ENCODE measurements at regions of chr6 and their contacts with region 1.

Region 1: GRCh38 chr6:24646782-24647181 is 791 bp upstream of the KIAA0319 start:
- DNase-seq: no peak
- H3K4me3 ChIP-seq: peak overlapping the region in 1 of 4 experiments; percentile 73; a peak in 1 of 8 replicates
- H3K27ac ChIP-seq: no peak overlapping the region
- H3K4me1 ChIP-seq: no peaks in the 10 kb centered on the region
- H3K27me3 ChIP-seq: no peaks in the 10 kb centered on the region; a peak in 1 of 7 replicates
- CTCF ChIP-seq: no peak
- EP300 ChIP-seq: no peak
- POLR2A ChIP-seq: no peak
- RAD21 ChIP-seq: no peak

Region 2: DNA sequence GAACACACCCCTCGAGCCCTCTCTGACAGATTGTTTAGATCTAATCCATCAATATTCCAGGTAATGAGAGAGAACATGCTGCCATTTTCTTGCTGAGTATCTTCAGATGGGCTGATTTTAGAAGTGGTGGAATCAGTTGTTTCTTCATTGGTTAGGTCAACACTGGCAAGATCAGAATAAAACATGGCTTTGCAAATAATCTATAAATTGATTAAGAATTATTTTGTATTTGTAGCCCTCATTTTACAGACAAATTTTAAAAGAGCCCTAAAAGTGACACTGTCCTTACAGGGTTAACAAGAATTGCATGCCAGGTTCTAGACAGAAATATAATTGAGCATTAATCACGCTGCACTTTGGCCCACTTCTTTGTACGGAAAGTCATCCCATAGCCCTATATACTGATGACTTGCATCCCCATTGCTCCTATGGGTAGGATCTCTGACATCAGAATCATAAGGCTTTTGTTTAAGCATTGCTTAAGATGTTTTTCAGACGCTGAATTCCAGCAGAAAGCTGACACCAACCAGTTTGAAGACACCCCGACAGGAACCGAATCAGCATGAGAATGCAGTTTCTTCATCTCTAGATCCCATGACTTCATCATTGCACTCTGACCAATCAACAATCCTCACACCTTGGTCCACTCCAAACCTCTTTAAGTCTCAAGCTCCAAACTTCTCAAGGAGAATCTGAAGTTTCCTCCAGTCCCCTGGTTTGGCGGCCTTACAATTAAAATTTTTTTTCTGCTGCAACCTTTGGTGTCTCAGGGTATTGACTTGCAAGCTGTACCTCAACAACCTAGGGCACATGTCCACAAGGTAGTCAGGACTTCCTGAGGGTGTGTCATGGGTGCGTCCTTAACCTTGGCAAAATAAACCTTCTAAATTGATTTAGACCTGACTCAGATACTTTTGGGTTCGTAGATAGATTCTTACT is 12.1 kb after region 1 on chr6:
- CTCF ChIA-PET with region 1: interaction called, 10 read pairs
- POLR2A ChIA-PET with region 1: interaction called, 18 read pairs
- DNase-seq: no peak
- H3K4me3 ChIP-seq: peak overlapping the region in 1 of 4 experiments; percentile 13; a peak in 1 of 8 replicates
- H3K27ac ChIP-seq: no peak overlapping the region
- H3K4me1 ChIP-seq: peaks cover 2 to 3% (median 2%) of the 10 kb centered on the region in 4 experiments; a peak in 4 of 7 replicates
- H3K27me3 ChIP-seq: no peaks in the 10 kb centered on the region
- CTCF ChIP-seq: no peak
- EP300 ChIP-seq: no peak
- POLR2A ChIP-seq: no peak
- RAD21 ChIP-seq: no peak

Region 3: DNA sequence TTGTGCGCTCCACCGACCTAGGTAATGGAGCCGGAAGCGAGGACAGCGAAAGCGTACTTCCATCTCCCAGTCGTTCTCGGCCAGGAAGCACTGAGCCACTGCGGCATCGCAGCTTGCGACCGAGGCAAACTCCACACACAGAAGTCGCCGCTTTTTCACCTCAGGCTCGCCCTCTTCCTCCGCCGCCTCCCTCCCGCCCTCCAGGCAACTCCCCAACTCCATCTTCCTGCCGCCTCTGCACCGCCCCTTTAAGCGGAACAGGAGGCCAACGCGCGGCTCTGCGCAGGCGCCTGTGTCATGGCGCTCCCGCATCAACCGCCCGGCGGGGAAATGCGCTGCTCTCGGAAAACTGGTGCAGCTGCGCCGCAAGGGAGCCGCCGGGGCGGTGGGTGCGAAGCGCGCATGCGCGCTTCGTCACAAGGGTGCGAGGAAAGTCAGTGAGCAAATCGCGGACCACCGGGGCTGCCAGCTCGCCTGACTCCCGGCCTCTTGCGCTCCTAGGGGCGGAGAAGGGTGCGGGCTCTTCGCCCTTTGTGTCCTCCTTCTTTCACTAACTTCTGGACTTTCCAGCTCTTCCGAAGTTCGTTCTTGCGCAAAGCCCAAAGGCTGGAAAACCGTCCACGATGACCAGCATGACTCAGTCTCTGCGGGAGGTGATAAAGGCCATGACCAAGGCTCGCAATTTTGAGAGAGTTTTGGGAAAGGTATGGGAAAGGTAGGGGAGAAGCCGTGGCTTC is 20.0 kb after region 1 on chr6 and contains the starts of genes ACOT13 and TDP2:
- CTCF ChIA-PET with region 1: interaction called, 9 read pairs
- POLR2A ChIA-PET with region 1: interaction called, 15 read pairs
- DNase-seq: peak; percentile 93 to 97
- H3K4me3 ChIP-seq: peak within 1 kb of the TSS; percentile 85 to 99 (median 93)
- H3K27ac ChIP-seq: peak within 1 kb of the TSS; percentile 92
- H3K4me1 ChIP-seq: peaks cover 0 to 5% (median 0%) of the 10 kb centered on the region in 4 experiments; a peak in 3 of 7 replicates
- H3K27me3 ChIP-seq: no peaks in the 10 kb centered on the region
- CTCF ChIP-seq: peak; percentile 47 to 63 (median 58)
- EP300 ChIP-seq: peak in 1 of 2 experiments; percentile 57; a peak in 1 of 3 replicates
- POLR2A ChIP-seq: peak; percentile 86 to 94
- RAD21 ChIP-seq: peak; percentile 47 to 63
- total RNA-seq, gene ACOT13: 40.6 and 42.8 TPM in 2 replicates
- total RNA-seq, gene TDP2: 51.6 and 52.6 TPM in 2 replicates